Activated CD4-positive, alpha-beta T cell treated with anti-CD3 and anti-CD28 coated beads, Interleukin-2, amount 10 ng/mL, durations not matched to agents 24 days and 14 days (primary cell): ENCODE measurements at regions of chr6 and their contacts with region 1.

Region 1: GRCh38 chr6:52162940-52163908 is 23.0 kb upstream of the IL17A start:
- DNase-seq: peak; percentile 69
- H3K4me3 Mint-ChIP-seq: no peak overlapping the region
- H3K27ac Mint-ChIP-seq: peak overlapping the region; percentile 48
- H3K4me1 Mint-ChIP-seq: peaks cover 20% of the 10 kb centered on the region
- H3K27me3 Mint-ChIP-seq: peaks cover 35% of the 10 kb centered on the region

Region 2: GRCh38 chr6:50778696-50779095 is 1384.5 kb before region 1 on chr6:
- intact Hi-C with region 1: no loop called
- DNase-seq: no peak
- H3K4me3 Mint-ChIP-seq: no peak overlapping the region
- H3K27ac Mint-ChIP-seq: no peak overlapping the region
- H3K4me1 Mint-ChIP-seq: no peaks in the 10 kb centered on the region
- H3K27me3 Mint-ChIP-seq: no peaks in the 10 kb centered on the region

Region 3: DNA sequence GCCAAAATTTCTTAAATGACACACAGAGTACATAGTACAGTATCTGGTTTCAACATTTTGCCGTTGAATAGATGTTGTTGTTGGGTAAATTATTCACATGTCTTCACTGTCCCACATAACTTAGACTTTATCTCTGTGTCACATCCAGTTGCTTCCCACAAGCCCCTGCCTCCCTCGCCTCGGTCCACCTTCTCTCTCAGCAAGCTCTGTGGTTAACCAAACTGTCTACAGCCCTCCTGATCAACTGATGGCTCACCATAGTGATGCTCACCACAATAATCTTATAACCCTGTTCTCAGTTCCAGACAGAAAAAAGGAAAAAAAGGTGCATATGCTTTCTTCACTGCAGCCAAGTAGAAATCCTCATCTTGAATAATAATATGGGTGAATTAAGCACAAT is 58.1 kb after region 1 on chr6:
- intact Hi-C with region 1: loop called (anchors 1 kb)
- DNase-seq: peak; percentile 76
- H3K4me3 Mint-ChIP-seq: peak overlapping the region; percentile 30
- H3K27ac Mint-ChIP-seq: peak overlapping the region; percentile 58
- H3K4me1 Mint-ChIP-seq: peaks cover 12% of the 10 kb centered on the region
- H3K27me3 Mint-ChIP-seq: peaks cover 52% of the 10 kb centered on the region

Region 4: GRCh38 chr6:52233975-52234823 is 71.0 kb after region 1 on chr6:
- intact Hi-C with region 1: loop called (anchors 1 kb)
- DNase-seq: peak; percentile 63
- H3K4me3 Mint-ChIP-seq: no peak overlapping the region
- H3K27ac Mint-ChIP-seq: no peak overlapping the region
- H3K4me1 Mint-ChIP-seq: peaks cover 31% of the 10 kb centered on the region
- H3K27me3 Mint-ChIP-seq: peaks cover 67% of the 10 kb centered on the region

Region 5: GRCh38 chr6:52263709-52264540 is 100.7 kb after region 1 on chr6:
- intact Hi-C with region 1: loop called (anchors 1 kb)
- DNase-seq: peak; percentile 92
- H3K4me3 Mint-ChIP-seq: no peak overlapping the region
- H3K27ac Mint-ChIP-seq: peak overlapping the region; percentile 16
- H3K4me1 Mint-ChIP-seq: peaks cover 8% of the 10 kb centered on the region
- H3K27me3 Mint-ChIP-seq: no peaks in the 10 kb centered on the region

Region 6: DNA sequence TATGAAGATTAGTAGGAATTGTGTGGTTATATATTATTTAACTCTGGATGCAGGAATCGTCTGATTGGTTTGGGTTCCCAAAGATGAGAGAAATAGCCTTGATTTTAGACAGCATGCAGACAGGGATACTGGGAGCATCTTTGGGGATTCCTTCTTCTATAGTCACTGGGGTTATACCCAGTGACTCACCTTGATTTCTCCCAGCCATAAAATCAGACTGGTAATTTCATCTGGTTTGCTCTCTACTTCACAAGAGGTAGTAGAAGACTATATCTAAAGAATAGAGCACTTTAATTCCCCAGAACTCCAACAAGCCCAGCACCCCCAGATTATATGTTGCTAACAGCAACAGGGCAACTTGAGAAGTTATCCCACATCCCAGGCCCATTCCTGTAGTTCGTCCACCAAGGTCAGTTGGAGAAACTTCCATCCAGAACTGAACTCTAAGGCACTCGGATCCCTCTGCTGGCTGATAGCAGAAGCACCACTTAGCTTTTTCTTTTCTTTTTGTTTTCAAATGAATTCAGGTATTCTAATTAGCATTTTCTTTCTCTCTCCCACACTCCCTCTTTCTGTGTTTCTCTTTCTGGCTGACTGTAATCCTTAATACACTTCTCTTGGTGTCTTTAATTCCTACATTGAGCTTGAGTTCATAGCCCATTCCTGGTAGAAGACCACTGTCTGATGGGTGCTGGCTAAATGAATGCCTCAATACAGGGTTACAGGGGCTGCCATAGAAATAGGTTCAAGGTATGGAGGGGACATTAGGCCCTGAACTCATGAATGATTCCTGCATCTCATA is 236.5 kb after region 1 on chr6:
- intact Hi-C with region 1: loop called (anchors 1 kb)
- DNase-seq: peak; percentile 83
- H3K4me3 Mint-ChIP-seq: no peak overlapping the region
- H3K27ac Mint-ChIP-seq: no peak overlapping the region
- H3K4me1 Mint-ChIP-seq: peaks cover 45% of the 10 kb centered on the region
- H3K27me3 Mint-ChIP-seq: no peaks in the 10 kb centered on the region

Region 7: DNA sequence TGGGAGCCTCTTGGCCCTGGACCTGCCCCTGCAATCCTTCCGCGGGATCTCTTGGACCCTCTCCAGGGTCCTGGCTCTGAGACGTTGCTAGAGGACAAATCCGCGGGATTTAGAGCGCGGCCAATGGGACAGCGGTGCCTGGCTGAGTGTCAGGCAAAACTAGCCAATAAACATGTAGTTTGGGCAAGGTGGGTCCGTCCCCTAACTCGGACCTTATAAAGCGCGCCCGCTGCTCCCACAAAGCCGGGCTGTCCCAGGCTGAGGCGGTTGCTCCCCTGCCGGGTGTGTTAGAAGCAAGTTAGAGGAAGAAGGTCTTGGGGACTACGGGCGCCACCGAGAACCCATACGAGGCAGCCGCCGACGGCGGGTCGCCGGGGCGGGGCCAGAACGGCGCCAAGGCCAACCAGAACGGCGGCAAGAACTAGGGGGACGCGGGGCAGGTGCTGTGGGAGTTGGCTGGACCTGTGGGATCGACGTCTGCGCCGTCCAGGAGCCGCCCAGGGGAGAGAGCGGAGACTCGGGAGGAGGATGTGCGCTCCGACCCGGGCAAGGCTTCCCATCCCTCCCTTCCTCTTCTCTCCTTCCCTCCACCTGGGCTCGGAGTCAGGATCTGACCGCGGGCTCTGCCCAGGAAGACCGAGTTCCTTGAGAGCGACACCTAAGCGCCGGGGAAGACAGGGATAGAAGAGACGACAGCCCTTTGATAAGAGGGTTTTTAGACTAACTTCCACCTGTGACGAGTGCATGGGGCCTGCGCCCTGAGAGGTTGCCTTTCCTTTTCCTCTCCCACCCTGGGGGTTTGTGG is 501.2 kb after region 1 on chr6:
- intact Hi-C with region 1: loop called (anchors 5 kb)
- DNase-seq: peak; percentile 93
- H3K4me3 Mint-ChIP-seq: no peak overlapping the region
- H3K27ac Mint-ChIP-seq: no peak overlapping the region
- H3K4me1 Mint-ChIP-seq: peaks cover 4% of the 10 kb centered on the region
- H3K27me3 Mint-ChIP-seq: no peaks in the 10 kb centered on the region